ENCODE measurements at regions of chr22 and their contacts with region 1.

Region 1: DNA sequence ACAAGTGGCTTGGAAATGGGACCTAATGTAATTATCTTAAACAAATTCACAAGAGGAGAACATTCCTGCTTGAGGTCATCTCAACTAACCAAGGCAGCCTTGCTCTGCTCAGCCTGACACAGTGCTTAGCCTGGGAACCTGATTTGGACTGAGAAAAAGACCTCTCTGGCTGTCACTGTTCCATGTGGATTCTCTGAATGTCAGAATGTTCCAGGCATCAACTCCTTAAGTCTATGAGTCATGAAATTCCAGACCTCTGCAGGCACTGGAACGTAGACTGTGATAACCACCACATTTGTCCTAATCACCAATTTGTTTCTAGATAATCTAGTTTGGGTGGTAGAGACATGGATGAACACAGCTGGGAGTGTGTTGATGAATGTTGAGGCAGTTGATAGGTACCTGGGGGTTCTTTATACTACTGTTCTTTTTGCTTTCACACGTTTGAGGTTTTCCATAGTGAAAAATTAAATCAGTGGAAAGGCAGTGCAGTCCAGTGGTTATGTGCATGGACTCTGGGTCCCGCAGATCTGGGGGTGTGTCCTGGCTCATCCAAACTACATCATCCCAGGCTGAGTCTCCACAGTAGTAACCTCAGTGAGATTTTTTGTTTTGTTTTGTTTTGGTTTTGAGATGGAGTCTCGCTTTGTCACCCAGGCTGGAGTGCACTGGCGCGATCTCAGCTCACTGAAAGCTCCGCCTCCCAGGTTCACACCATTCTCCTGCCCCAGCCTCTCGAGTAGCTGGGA is 269.6 kb downstream of the MN1 start:
- DNase-seq: peak; percentile 16
- H3K4me3 ChIP-seq: no peak overlapping the region
- H3K27ac ChIP-seq: no peak overlapping the region
- H3K4me1 ChIP-seq: peaks cover 3% of the 10 kb centered on the region
- H3K27me3 ChIP-seq: no peaks in the 10 kb centered on the region
- CTCF ChIP-seq: no peak
- POLR2A ChIP-seq: no peak

Region 2: DNA sequence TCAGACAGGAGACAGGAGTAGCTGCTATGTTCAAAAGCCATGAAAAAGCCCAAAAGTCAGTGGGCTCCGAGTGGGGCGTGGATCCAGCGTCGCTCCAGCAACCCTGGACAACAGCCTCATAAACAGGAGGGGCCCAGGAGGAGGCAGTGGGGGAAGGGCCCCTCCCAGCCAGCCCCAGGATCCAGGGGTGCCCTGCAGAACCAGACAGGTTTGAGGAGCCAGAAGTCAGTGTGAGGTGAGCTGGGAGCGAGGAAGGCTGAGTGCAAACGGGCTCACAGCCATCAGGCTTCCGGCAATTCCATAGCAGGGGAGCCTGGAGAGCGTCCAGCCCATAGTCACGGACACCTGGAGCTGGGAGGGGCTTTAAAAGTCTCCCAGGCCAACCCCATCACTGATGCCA is 51.9 kb after region 1 on chr22:
- intact Hi-C with region 1: no loop called
- DNase-seq: no peak
- H3K4me3 ChIP-seq: no peak overlapping the region
- H3K27ac ChIP-seq: no peak overlapping the region
- H3K4me1 ChIP-seq: peaks cover 5% of the 10 kb centered on the region
- H3K27me3 ChIP-seq: no peaks in the 10 kb centered on the region
- CTCF ChIP-seq: no peak
- POLR2A ChIP-seq: no peak

Region 3: GRCh38 chr22:27597703-27598444 is 65.9 kb after region 1 on chr22:
- intact Hi-C with region 1: loop called (anchors 10 kb)
- DNase-seq: no peak
- H3K4me3 ChIP-seq: no peak overlapping the region
- H3K27ac ChIP-seq: no peak overlapping the region
- H3K4me1 ChIP-seq: no peaks in the 10 kb centered on the region
- H3K27me3 ChIP-seq: no peaks in the 10 kb centered on the region
- CTCF ChIP-seq: no peak
- POLR2A ChIP-seq: no peak

Region 4: DNA sequence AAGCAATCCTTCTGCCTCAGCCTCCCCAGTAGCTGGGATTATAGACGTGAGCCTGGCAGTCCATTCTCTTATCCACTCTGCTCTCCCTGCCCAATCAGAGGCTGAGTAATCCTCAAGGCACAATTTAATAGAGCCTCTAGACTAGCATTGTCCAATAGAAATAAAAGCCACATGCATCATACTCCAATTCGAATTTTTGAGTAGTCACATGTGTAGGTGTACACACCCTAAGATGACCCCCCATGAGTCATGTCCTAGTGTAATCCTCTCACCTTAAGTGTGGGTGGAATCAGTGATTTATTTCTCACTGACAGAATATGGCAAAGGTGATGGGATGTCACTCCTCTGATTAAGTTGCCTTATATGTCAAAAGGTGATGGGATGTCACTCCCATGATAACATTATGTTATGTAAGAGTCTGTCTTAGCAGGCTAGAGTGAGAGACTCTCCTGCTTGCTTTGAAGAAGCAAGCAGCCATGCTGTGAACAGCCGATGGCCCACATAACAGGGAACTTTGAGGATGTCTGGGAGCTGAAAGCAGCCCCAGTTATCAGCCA is 208.3 kb after region 1 on chr22:
- intact Hi-C with region 1: no loop called
- DNase-seq: no peak
- H3K4me3 ChIP-seq: no peak overlapping the region
- H3K27ac ChIP-seq: no peak overlapping the region
- H3K4me1 ChIP-seq: no peaks in the 10 kb centered on the region
- H3K27me3 ChIP-seq: no peaks in the 10 kb centered on the region
- CTCF ChIP-seq: no peak
- POLR2A ChIP-seq: no peak

Measured in testis (tissue), 5 donors.